BJ (cell line): ENCODE measurements at regions of chr22 and their contacts with region 1.

Region 1: DNA sequence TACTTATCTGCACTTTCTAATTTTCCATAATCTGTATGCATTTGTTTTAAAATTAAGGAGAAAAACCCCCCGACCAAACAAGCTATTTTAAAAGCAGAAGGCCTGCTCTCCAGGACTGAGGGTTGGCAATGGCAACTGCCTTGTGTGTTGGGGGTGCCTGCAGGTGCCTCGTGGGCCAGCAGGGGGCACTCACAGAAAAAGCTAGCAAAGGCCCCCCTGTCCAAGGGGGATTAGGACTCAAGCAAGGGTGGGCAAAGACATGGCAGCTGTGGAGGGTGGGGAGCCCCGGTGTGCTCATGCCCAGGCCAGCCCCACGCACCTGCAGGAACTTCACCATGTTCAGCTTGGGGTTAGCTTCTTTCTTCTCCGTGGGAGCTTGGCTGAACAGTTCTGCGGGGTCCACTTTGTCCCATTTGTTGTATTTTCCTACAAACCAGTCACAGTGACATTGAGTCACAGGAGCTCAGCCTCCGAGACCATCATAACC is 10.3 kb downstream of the TOP3B start:
- DNase-seq: no peak
- H3K4me3 ChIP-seq: no peak overlapping the region
- H3K27me3 ChIP-seq: no peaks in the 10 kb centered on the region
- CTCF ChIP-seq: peak; percentile 91

Region 2: GRCh38 chr22:21867528-21868266 is 104.6 kb before region 1 on chr22 and contains the start of gene MAPK1:
- CTCF ChIA-PET with region 1: no interaction called
- POLR2A ChIA-PET with region 1: no interaction called
- DNase-seq: peak; percentile 31
- H3K4me3 ChIP-seq: peak within 1 kb of the TSS; percentile 85
- H3K27me3 ChIP-seq: no peaks in the 10 kb centered on the region
- CTCF ChIP-seq: peak; percentile 36
- polyA plus RNA-seq, gene MAPK1: 119 and 150 TPM in 2 replicates

Region 3: DNA sequence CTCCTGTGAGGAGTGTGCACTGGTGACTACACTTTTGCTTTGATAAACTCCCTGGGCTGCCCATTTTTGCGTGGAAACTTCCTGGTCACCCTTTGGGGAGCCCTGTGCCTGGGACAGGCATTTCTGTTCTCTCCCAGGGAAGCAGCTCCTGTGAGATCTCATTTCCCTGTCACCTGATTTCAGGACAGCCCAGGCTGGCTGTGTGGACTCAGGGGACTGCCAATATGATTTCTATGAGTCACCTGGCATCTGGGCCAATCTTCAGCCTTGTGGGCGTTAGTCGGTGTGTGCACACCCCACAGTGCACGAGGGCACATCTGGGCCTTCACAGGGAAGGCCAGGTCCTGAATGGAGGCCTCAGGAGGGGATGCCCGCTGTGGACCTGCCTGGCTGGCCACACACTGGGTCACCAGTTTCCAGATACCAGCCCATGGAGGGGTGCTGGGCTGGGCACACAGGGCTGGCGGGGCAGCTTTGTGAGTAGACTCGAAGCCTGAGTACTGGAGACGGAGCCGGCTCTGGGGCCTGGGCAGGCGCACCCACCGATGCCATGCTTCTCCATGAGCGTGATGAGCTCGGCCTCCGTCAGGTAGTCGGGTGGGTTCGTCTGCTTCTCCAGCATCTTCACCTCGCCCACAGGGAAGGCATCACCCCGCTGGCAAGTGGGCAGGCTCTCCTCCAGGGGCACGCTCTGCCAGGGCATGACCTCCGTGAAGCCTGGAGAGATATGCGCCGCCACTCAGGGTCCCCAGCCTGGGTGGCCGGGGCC is 10.3 kb before region 1 on chr22:
- CTCF ChIA-PET with region 1: interaction called, 18 read pairs
- POLR2A ChIA-PET with region 1: no interaction called
- DNase-seq: no peak
- H3K4me3 ChIP-seq: no peak overlapping the region
- H3K27me3 ChIP-seq: no peaks in the 10 kb centered on the region
- CTCF ChIP-seq: no peak

Region 4: GRCh38 chr22:21982338-21982965 is 10.1 kb after region 1 on chr22 and contains the start of gene TOP3B:
- CTCF ChIA-PET with region 1: interaction called, 22 read pairs
- POLR2A ChIA-PET with region 1: no interaction called
- DNase-seq: no peak
- H3K4me3 ChIP-seq: peak within 1 kb of the TSS; percentile 98
- H3K27me3 ChIP-seq: no peaks in the 10 kb centered on the region
- CTCF ChIP-seq: no peak
- polyA plus RNA-seq, gene TOP3B: 8.0 and 12.8 TPM in 2 replicates